Common myeloid progenitor, CD34-positive (primary cell): ENCODE measurements at regions of chr22 and their contacts with region 1.

Region 1: GRCh38 chr22:37316875-37317371 is 34.6 kb downstream of the CYTH4 start:
- DNase-seq: peak; percentile 79 to 88 (median 87)
- H3K4me3 ChIP-seq: no peak overlapping the region
- H3K27ac ChIP-seq: no peak overlapping the region
- H3K4me1 ChIP-seq: peaks cover 1 to 42% (median 38%) of the 10 kb centered on the region in 4 experiments
- H3K27me3 ChIP-seq: no peaks in the 10 kb centered on the region

Region 2: GRCh38 chr22:37267135-37267587 is 49.8 kb before region 1 on chr22:
- CTCF ChIA-PET with region 1: interaction called, 64 read pairs
- POLR2A ChIA-PET with region 1: interaction called, 3 read pairs
- DNase-seq: peak in 2 of 3 donors; percentile 59 to 62
- H3K4me3 ChIP-seq: peak overlapping the region in 6 of 7 experiments; percentile 30 to 75 (median 56)
- H3K27ac ChIP-seq: peak overlapping the region; percentile 43 to 78
- H3K4me1 ChIP-seq: peaks cover 22 to 49% (median 46%) of the 10 kb centered on the region in 4 experiments
- H3K27me3 ChIP-seq: no peaks in the 10 kb centered on the region

Region 3: GRCh38 chr22:37303821-37304274 is 13.1 kb before region 1 on chr22:
- CTCF ChIA-PET with region 1: interaction called, 25 read pairs
- POLR2A ChIA-PET with region 1: interaction called, 4 read pairs
- DNase-seq: peak in 2 of 3 donors; percentile 85 to 87
- H3K4me3 ChIP-seq: no peak overlapping the region
- H3K27ac ChIP-seq: peak overlapping the region in 1 of 2 experiments; percentile 46
- H3K4me1 ChIP-seq: peaks cover 29 to 98% (median 96%) of the 10 kb centered on the region in 4 experiments
- H3K27me3 ChIP-seq: no peaks in the 10 kb centered on the region

Region 4: DNA sequence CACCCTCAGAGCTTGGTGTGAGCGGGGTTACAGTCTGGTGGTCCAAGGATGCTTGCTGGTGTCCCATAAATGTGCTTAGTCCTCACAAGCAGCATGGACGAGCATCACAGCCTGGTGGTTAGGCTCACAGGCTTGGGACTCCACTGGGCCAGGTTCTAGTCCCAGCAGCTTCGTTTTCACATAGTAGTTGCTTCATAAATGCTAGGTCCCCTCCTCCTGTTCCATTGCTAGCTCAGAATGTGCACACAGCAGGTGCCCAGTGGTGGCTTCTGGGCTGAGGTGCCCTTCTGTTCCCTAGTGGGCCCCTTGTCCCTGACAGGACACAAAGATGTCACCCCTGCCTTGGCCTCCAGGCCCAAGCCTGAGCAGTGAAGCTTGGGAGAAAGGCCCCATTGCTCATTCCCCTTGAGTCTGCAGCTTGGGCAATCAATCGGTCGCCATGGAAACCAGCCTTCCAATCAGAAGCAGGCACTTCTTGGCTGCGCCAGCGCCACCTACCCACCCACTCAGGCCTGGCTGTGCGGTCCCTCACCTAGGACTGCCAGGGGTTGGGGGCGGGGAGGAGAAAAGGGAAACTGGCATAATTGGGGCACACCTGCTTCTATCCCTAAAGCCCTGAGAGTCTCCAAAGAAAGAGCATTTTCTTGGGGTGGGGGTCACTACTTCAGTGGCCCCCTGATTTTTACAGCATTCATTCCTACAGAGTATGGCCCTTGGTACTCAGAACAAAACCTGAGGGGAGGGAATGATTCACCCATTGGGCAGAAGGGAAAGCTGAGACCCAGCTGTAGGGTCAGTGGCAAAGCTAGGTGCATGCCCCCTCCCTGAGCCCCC is 13.5 kb after region 1 on chr22:
- CTCF ChIA-PET with region 1: interaction called, 32 read pairs
- POLR2A ChIA-PET with region 1: interaction called, 3 read pairs
- DNase-seq: peak; percentile 69 to 80 (median 77)
- H3K4me3 ChIP-seq: no peak overlapping the region
- H3K27ac ChIP-seq: no peak overlapping the region
- H3K4me1 ChIP-seq: peaks cover 0 to 9% (median 5%) of the 10 kb centered on the region in 4 experiments
- H3K27me3 ChIP-seq: peaks cover 6 to 75% (median 38%) of the 10 kb centered on the region in 5 experiments

Region 5: DNA sequence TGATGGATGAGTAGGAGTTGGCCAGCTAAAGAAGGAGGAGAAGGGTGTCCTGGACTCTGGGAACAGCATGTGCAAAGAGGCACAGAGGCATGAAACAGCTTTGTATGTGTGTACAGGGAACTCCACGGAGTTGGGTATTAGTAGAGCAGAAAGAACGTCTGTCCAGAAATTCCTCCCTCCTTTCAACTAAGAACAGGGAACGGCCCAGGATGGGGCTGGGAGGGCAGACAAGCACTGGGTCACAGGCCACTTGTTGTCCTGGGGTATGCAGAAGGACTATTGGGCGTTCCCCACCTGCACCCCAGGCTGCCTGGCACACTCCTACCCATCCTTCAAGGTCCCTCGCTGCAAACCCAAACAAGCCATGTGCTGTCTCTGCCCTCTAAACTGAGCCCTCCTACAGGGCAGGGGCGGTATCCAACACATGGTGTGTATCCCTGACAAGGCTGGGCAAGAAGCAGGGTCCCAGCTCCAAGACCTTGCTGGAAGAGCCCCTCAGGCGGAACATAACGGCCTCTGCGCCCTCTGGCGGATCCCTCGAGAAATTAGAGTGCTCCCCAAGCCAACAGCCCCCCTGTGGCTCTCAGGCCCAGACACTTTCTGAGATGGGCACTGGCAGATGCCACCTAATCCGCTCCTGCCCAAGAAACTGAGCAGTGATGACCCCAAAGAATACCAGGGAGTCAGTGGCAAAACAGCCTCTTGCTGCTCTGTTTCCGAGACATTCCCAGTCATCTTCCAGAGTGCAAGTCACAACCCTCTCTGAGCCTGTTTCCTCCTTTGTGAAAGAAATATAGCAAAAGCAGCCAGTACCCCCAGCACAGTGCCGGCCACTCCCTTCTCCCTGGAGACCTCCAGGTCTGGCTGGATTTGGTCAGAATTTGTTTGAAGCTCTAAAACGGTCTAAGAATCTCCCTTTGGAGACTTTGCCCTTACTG is 112.0 kb after region 1 on chr22:
- CTCF ChIA-PET with region 1: interaction called, 82 read pairs
- POLR2A ChIA-PET with region 1: no interaction called
- DNase-seq: peak; percentile 59 to 78 (median 70)
- H3K4me3 ChIP-seq: no peak overlapping the region
- H3K27ac ChIP-seq: no peak overlapping the region
- H3K4me1 ChIP-seq: peaks cover 0 to 24% (median 14%) of the 10 kb centered on the region in 4 experiments
- H3K27me3 ChIP-seq: peaks cover 3 to 50% (median 20%) of the 10 kb centered on the region in 5 experiments

Region 6: GRCh38 chr22:37448511-37449127 is 131.7 kb after region 1 on chr22:
- CTCF ChIA-PET with region 1: interaction called, 66 read pairs
- POLR2A ChIA-PET with region 1: no interaction called
- DNase-seq: no peak
- H3K4me3 ChIP-seq: no peak overlapping the region
- H3K27ac ChIP-seq: no peak overlapping the region
- H3K4me1 ChIP-seq: peaks cover 0 to 16% (median 8%) of the 10 kb centered on the region in 4 experiments
- H3K27me3 ChIP-seq: peaks cover 0 to 4% (median 0%) of the 10 kb centered on the region in 5 experiments

Region 7: DNA sequence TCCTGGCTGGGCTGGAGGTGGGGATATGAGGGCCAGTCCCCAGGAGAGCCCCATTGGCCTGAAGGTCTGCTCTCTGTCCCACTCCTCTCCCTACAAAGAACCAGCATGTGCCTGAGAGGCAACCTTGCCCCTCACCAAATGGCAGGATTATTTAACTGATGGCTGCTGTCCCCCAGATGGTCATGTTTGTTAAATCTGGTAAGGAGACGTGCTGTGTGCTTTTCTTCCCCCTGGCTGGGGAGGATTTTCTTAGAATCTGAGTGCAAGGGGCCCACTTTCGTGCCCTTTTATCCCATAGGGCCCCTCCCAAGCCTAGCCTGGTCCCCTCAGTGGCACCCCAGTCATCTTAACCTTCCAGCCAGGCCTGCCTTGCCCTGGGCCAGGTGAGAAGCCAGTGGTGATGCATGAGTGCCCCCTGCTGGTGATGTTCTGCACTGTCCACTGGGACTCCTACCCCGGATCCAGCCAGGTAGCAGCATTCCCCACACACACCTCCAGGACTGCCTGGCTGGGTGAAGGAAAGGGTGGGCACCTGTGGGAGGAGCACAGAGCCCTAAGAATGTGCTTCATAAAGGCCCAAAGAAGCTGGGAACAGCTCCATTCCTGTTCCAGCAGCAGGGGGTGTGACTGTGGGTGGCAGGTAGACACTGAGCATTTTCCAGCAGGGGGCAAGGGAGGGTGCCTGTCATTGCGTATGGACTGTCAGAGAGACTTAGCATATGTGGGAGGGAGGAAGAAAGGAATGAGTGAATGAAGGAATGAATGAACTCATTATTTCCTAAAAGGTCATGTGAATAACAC is 140.4 kb after region 1 on chr22:
- CTCF ChIA-PET with region 1: interaction called, 66 read pairs
- POLR2A ChIA-PET with region 1: no interaction called
- DNase-seq: peak; percentile 59 to 77 (median 71)
- H3K4me3 ChIP-seq: no peak overlapping the region
- H3K27ac ChIP-seq: no peak overlapping the region
- H3K4me1 ChIP-seq: peaks cover 0 to 6% (median 3%) of the 10 kb centered on the region in 4 experiments
- H3K27me3 ChIP-seq: no peaks in the 10 kb centered on the region